Motor neuron (in vitro differentiated cells): ENCODE measurements at regions of chr9 and their contacts with region 1.

Region 1: DNA sequence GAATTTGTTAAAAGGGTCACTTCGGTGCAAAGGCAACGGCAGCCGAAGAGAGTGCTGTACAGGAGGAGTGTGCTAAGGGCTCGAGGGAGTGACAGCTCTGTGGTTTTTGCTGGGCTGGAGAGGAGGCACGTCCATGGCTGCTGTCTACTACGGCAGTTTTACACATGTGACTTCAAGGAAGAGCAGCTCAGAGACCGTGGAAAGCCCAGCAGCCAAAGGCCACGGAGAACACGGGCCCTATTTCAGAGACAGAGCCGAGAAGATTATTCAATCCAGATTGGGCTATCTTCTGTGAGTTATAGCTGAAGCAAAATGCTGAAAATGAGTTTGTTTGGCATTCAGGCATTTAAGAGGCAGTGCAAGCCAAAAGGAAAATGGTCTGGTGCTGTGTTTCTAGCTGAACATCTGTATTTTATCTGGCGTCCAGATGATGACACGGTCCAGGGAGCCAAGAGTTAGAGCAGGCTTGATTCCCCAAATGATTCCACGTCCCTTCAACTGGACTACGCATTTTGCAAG is 96.4 kb downstream of the RFK start:
- ATAC-seq: peak in 4 of 8 experiments; percentile 20 to 94 (median 78)
- H3K4me3 ChIP-seq: no peak overlapping the region
- H3K27ac ChIP-seq: no peak overlapping the region
- H3K4me1 ChIP-seq: no peaks in the 10 kb centered on the region

Region 2: DNA sequence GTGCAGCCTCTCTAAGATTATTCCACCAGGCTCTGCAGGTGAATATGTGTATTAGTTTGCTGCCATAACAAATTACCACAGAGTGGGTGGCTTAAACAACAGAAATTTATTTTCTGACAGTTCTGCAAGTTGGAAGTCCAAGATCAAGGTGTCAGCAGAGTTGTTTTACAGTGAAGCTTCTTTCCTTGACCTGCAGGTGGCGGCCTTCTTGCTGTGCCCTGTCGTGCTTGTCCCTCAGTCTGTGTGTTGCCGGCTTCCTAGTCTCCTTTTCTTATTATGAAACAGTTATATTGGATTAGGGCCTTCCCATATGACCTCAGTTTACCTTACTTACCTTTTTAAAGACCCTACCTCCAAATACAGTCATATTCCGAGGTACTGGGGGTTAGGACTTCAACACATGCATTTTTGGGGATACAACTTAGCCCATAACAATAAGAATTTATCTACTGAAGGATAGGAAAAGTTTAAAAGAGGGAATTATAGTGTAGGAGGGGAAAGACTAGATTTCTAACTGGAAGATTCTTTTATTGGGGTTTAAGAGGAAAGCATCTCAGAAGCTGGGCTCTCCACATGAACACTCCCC is 1112.1 kb before region 1 on chr9:
- in situ Hi-C with region 1: loop called in 1 of 9 experiments (anchors 25 kb)
- ATAC-seq: peak in 3 of 8 experiments; percentile 56 to 74 (median 63)
- H3K4me3 ChIP-seq: no peak overlapping the region
- H3K27ac ChIP-seq: no peak overlapping the region
- H3K4me1 ChIP-seq: no peaks in the 10 kb centered on the region

Region 3: GRCh38 chr9:75890472-75891276 is 407.1 kb before region 1 on chr9 and contains the start of gene PCSK5:
- in situ Hi-C with region 1: loop called in 4 of 9 experiments (anchors 10 to 25 kb)
- ATAC-seq: peak; percentile 77 to 90 (median 87)
- H3K4me3 ChIP-seq: peak within 1 kb of the TSS; percentile 50 to 74 (median 56)
- H3K27ac ChIP-seq: peak within 1 kb of the TSS in 1 of 2 donors; percentile 59
- H3K4me1 ChIP-seq: peaks cover 9 to 27% of the 10 kb centered on the region in 2 donors
- total RNA-seq, gene PCSK5: 1.8 to 21.4 (median 4.9) TPM

Region 4: GRCh38 chr9:76086539-76086938 is 211.2 kb before region 1 on chr9:
- in situ Hi-C with region 1: loop called in 1 of 9 experiments (anchors 25 kb)
- ATAC-seq: peak in 3 of 8 experiments; percentile 58 to 77 (median 59)
- H3K4me3 ChIP-seq: no peak overlapping the region
- H3K27ac ChIP-seq: no peak overlapping the region
- H3K4me1 ChIP-seq: no peaks in the 10 kb centered on the region

Region 5: GRCh38 chr9:76464706-76465105 is 166.9 kb after region 1 on chr9:
- in situ Hi-C with region 1: no loop called
- ATAC-seq: no peak
- H3K4me3 ChIP-seq: no peak overlapping the region
- H3K27ac ChIP-seq: no peak overlapping the region
- H3K4me1 ChIP-seq: peaks cover 0 to 8% of the 10 kb centered on the region in 2 donors